ENCODE measurements at regions of chr2 and their contacts with region 1.

Region 1: GRCh38 chr2:37982147-37982582 is 57.1 kb downstream of the RMDN2 start:
- DNase-seq: peak; percentile 64
- H3K4me3 ChIP-seq: peak overlapping the region; percentile 52
- H3K27ac ChIP-seq: no peak overlapping the region
- H3K4me1 ChIP-seq: peaks cover 4% of the 10 kb centered on the region
- H3K27me3 ChIP-seq: no peaks in the 10 kb centered on the region
- CTCF ChIP-seq: peak; percentile 90

Region 2: DNA sequence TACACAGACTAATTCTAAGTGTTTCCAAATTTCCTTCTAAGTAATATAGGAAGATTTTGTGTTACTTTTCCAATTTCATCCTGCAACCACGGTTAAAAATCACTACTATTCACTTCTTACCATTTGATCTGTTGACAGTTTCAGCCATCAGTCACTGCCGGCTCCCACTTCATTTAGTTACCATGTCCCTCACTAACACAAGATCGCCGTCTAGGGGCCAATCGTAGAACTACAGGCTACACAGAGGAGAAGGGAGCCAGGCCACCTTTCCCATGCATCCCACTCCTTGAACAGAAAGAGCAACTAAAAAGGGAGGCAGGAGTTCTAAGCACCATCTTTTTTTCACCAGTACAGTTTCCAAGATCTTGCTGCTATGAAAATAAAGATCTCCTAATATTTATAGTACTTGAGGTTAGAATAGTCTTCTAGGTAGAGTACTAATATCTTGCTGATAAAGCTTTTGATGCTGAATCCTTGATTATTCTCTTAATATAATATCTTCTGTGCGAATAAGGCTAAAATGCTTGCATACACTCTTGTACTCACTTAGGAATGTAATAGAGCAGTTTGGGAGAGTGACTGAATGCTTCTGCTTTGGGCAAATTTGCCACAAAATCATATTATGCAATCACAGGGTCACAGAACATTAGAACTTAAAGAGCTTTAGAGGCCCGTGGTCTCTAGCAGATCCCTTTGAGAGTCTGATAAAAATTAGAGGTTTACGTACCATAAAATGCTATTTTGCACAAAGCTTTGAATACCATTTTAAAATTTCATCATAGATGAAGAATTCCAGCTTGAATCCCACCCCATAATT is 133.3 kb after region 1 on chr2:
- intact Hi-C with region 1: loop called (anchors 10 kb)
- DNase-seq: peak; percentile 84
- H3K4me3 ChIP-seq: no peak overlapping the region
- H3K27ac ChIP-seq: peak overlapping the region; percentile 55
- H3K4me1 ChIP-seq: peaks cover 47% of the 10 kb centered on the region
- H3K27me3 ChIP-seq: no peaks in the 10 kb centered on the region
- CTCF ChIP-seq: peak; percentile 94

Region 3: GRCh38 chr2:38214209-38214717 is 232.1 kb after region 1 on chr2:
- intact Hi-C with region 1: no loop called
- DNase-seq: no peak
- H3K4me3 ChIP-seq: no peak overlapping the region
- H3K27ac ChIP-seq: no peak overlapping the region
- H3K4me1 ChIP-seq: peaks cover 6% of the 10 kb centered on the region
- H3K27me3 ChIP-seq: peaks cover 6% of the 10 kb centered on the region
- CTCF ChIP-seq: no peak

Region 4: GRCh38 chr2:38274286-38275276 is 292.4 kb after region 1 on chr2:
- intact Hi-C with region 1: loop called (anchors 5 kb)
- DNase-seq: no peak
- H3K4me3 ChIP-seq: no peak overlapping the region
- H3K27ac ChIP-seq: no peak overlapping the region
- H3K4me1 ChIP-seq: no peaks in the 10 kb centered on the region
- H3K27me3 ChIP-seq: peaks cover 18% of the 10 kb centered on the region
- CTCF ChIP-seq: peak; percentile 73

Measured in left ventricle myocardium inferior (tissue), 1 donor.